ENCODE measurements at regions of chr9 and their contacts with region 1.

Region 1: DNA sequence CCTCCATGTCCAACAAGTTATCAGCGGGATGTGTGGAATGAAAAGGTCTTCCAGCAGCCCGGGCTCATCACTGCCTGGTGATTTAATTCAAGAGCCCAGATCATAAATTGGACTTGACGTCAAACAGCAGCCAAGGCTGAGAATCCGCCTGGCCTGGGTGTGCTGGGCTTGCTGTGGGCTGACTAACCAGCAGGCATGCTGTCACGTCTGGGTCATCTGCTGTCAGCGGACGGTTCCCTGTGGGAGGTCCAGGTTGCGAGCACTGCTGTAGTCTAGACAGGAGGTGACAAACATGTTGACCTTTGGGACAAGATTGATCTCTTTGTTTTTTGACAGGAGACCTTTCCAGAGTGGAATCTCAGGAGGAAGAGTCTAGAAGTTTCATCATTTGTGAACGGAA is 289.7 kb downstream of the OSTF1 start:
- DNase-seq: no peak
- H3K4me3 ChIP-seq: no peak overlapping the region
- H3K27ac ChIP-seq: no peak overlapping the region
- H3K4me1 ChIP-seq: no peaks in the 10 kb centered on the region
- H3K27me3 ChIP-seq: no peaks in the 10 kb centered on the region
- CTCF ChIP-seq: no peak

Region 2: GRCh38 chr9:75108555-75108954 is 269.5 kb before region 1 on chr9:
- CTCF ChIA-PET with region 1: no interaction called
- POLR2A ChIA-PET with region 1: no interaction called
- intact Hi-C with region 1: no loop called
- DNase-seq: no peak
- H3K4me3 ChIP-seq: no peak overlapping the region
- H3K27ac ChIP-seq: no peak overlapping the region
- H3K4me1 ChIP-seq: no peaks in the 10 kb centered on the region
- H3K27me3 ChIP-seq: no peaks in the 10 kb centered on the region
- CTCF ChIP-seq: no peak

Region 3: GRCh38 chr9:75429531-75430475 is 51.8 kb after region 1 on chr9:
- CTCF ChIA-PET with region 1: no interaction called
- POLR2A ChIA-PET with region 1: no interaction called
- intact Hi-C with region 1: loop called (anchors 10 kb)
- DNase-seq: no peak
- H3K4me3 ChIP-seq: no peak overlapping the region
- H3K27ac ChIP-seq: no peak overlapping the region
- H3K4me1 ChIP-seq: no peaks in the 10 kb centered on the region
- H3K27me3 ChIP-seq: no peaks in the 10 kb centered on the region
- CTCF ChIP-seq: no peak

Region 4: DNA sequence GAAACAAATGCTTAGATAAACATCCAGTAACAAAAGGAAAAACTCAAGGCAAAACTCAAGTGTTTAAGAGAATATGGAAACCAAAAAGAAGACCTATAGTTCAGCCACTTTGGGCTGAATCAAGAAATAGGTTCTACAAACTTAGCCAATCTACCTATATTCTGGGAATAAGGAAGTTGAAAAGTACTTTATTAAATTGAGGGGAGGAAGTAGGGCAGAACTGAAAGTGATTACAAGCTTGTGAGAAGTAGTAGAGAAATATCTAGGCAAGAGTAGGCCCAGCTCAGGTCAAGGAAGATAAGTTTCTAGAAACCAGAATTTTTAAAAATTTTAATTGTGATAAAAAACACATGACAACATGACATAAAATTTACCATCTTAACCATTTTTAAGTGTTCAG is 127.6 kb after region 1 on chr9:
- CTCF ChIA-PET with region 1: no interaction called
- POLR2A ChIA-PET with region 1: no interaction called
- intact Hi-C with region 1: no loop called
- DNase-seq: no peak
- H3K4me3 ChIP-seq: no peak overlapping the region
- H3K27ac ChIP-seq: no peak overlapping the region
- H3K4me1 ChIP-seq: no peaks in the 10 kb centered on the region
- H3K27me3 ChIP-seq: no peaks in the 10 kb centered on the region
- CTCF ChIP-seq: no peak

Measured in A673 (cell line).